Activated T-helper 1 cell treated with anti-CD3 and anti-CD28 coated beads, Interleukin-12 subunit alpha, Interleukin-12 subunit beta, Interleukin-2, Interleukin-4 antibody, amounts not matched to agents 30 ng/mL and 10 ng/mL and 1 ng/mL, durations not matched to agents 14 hours and 24 hours and 36 hours (primary cell): ENCODE measurements at regions of chr3 and their contacts with region 1.

Region 1: GRCh38 chr3:191336833-191337232 is 6.5 kb upstream of the UTS2B start:
- DNase-seq: no peak
- H3K4me3 Mint-ChIP-seq: no peak overlapping the region
- H3K27ac Mint-ChIP-seq: no peak overlapping the region
- H3K4me1 Mint-ChIP-seq: peaks cover 27% of the 10 kb centered on the region
- H3K27me3 Mint-ChIP-seq: peaks cover 1% of the 10 kb centered on the region

Region 2: DNA sequence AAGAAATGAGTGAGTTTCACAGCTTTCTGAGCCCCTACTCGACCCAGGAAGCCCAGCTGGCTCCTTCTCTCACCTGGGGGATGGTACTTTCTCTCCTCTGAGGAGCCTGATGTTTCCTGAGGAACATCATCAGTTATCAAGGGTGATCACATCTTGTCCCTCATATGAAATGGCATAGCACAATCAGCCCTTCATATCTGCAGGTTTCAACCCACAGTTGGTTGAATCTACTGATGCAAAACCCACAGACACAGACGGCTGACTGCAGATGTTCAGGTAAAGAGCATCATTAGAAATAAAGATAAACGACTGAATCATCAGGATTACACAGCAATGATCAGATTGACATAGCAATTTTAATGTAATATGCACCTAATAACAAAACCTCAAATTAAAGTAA is 231.4 kb before region 1 on chr3:
- intact Hi-C with region 1: no loop called
- DNase-seq: no peak
- H3K4me3 Mint-ChIP-seq: no peak overlapping the region
- H3K27ac Mint-ChIP-seq: no peak overlapping the region
- H3K4me1 Mint-ChIP-seq: no peaks in the 10 kb centered on the region
- H3K27me3 Mint-ChIP-seq: no peaks in the 10 kb centered on the region

Region 3: DNA sequence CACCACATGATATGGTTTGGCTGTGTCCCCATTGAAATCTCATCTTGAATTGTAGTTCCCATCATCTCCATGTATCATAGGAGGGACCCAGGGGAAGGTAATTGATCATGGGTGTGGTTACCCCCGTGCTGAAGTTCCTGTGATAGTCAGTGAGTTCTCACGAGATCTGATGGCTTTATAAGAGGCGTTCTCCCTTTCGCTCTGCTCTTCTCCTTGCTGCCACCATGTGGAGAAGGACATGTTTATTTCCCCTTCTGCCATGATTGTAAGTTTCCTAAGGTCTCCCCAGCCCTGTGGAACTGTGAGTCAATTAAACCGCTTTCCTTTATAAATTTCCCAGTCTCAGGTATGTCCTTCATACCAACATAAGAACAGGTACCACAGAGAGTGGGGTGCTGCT is 115.9 kb before region 1 on chr3:
- intact Hi-C with region 1: no loop called
- DNase-seq: no peak
- H3K4me3 Mint-ChIP-seq: no peak overlapping the region
- H3K27ac Mint-ChIP-seq: no peak overlapping the region
- H3K4me1 Mint-ChIP-seq: no peaks in the 10 kb centered on the region
- H3K27me3 Mint-ChIP-seq: no peaks in the 10 kb centered on the region

Region 4: GRCh38 chr3:191353022-191353777 is 16.4 kb after region 1 on chr3:
- intact Hi-C with region 1: loop called (anchors 2 kb)
- DNase-seq: no peak
- H3K4me3 Mint-ChIP-seq: no peak overlapping the region
- H3K27ac Mint-ChIP-seq: no peak overlapping the region
- H3K4me1 Mint-ChIP-seq: peaks cover 6% of the 10 kb centered on the region
- H3K27me3 Mint-ChIP-seq: no peaks in the 10 kb centered on the region

Region 5: GRCh38 chr3:191376516-191377141 is 39.8 kb after region 1 on chr3:
- intact Hi-C with region 1: loop called (anchors 5 kb)
- DNase-seq: no peak
- H3K4me3 Mint-ChIP-seq: no peak overlapping the region
- H3K27ac Mint-ChIP-seq: no peak overlapping the region
- H3K4me1 Mint-ChIP-seq: peaks cover 9% of the 10 kb centered on the region
- H3K27me3 Mint-ChIP-seq: no peaks in the 10 kb centered on the region

Region 6: DNA sequence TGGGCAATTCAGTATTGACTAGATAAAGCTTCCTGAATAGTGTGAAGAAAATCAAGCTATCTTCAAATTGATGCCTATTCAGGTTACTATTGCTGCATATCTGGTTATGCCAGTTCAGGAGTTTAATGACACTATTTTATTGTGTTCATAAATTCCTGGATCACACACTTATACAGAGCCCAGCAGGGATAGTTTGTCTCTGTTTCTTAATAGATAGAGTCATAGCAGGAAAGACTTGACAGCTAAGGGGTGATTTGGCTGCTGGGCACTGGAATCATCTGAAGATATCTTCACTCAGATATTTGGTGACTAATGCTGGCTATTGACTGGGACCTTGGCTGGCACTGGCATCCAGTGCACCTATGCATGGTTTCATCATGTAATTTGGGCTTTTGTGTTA is 312.0 kb after region 1 on chr3:
- intact Hi-C with region 1: no loop called
- DNase-seq: no peak
- H3K4me3 Mint-ChIP-seq: no peak overlapping the region
- H3K27ac Mint-ChIP-seq: no peak overlapping the region
- H3K4me1 Mint-ChIP-seq: no peaks in the 10 kb centered on the region
- H3K27me3 Mint-ChIP-seq: no peaks in the 10 kb centered on the region

Region 7: DNA sequence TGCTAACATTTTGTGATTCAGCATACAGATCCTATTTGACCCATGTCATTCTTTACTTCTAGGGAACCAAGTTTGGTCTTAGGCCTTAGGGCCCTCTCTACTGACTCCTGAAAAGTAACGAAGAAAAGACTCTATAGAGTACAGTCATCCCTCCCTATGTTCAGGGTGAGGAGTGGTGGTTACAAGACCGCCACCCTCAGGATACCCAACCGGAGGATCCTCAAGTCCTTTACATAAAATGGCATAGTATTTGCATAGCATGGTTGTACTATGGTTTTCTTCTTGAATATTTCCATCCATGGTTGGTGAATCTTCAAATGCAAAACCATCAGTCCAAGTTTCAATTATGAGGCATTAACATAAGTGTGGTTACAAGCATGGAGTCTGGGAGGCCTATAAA is 1062.9 kb after region 1 on chr3:
- intact Hi-C with region 1: no loop called
- DNase-seq: no peak
- H3K4me3 Mint-ChIP-seq: no peak overlapping the region
- H3K27ac Mint-ChIP-seq: no peak overlapping the region
- H3K4me1 Mint-ChIP-seq: no peaks in the 10 kb centered on the region
- H3K27me3 Mint-ChIP-seq: peaks cover 6% of the 10 kb centered on the region